AG04449 (cell line): ENCODE measurements at regions of chr14 and their contacts with region 1.

Region 1: DNA sequence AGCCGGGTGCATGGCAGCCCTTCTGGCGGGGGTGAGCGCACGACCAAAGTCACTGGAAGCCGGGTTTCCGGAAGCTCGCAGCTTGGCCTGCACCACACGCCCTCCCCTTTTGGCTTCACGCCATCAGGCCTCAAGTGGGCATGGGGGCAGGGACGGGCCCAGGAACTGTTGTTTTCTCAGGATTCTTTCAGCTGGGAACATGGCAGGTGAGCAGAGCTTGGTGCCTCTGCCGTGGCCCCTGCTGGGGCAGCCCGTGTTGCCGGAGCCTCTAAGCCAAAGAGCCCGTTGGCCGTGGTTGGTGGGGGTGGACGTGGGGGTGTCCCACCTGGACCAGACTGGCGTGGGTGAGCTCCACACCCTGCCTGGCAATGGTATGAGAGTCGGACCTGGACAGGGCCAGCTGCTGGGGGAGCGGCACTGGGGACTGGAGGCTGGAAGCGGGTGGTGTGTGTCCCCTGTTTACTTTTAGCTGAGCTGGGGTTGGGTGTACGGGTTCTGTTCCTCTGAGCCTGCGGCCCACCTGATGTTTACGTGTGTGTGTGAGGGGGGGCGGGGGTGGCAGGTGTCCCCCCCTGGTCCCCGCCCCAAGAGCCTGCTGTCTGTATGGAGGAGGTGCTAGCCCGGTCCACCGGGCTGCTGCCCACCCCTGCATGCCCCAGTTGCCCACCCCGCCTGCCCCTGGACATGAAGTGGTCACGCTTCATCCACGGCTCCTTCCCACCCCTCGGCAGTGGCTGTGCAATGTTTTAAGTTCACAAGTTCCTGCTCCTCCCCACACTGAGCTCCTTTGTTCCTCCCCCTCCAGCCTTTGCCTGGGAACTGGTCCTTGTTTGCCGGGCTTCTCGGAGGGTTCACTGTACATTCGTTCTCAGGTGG is 28.7 kb upstream of the PLD4 start:
- DNase-seq: no peak
- H3K4me3 ChIP-seq: no peak overlapping the region
- CTCF ChIP-seq: no peak

Region 2: DNA sequence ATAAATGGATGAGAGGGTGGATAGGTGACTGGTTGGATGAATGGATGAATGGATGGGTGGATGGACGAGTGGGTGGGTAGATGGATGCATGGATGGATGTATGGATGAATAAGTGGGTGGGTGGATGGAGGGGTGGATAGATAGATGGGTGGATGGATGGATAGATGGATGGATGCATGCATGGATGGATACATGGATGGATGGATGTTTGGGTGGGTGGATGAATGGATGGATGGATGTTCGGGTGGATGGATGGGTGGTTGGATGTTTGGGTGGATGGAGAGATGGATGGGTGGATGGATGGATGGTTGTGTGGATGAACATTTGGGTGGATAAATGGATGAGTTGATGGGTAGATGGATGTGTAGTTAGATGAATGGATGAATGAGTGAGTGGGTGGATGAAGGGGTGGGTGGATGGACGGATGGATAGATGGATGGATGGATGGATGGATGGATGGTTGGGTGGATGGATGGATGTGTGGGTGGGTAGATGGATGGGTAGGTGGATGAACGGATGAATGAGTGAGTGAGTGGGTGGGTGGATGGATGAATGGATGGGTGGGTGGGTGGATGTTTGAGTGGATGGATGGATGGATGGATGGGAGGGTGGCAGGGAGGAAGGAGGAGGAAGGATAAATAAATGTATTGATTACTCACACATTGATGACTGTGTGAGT is 281.8 kb before region 1 on chr14:
- CTCF ChIA-PET with region 1: no interaction called
- POLR2A ChIA-PET with region 1: no interaction called
- DNase-seq: no peak
- H3K4me3 ChIP-seq: no peak overlapping the region
- CTCF ChIP-seq: no peak

Region 3: DNA sequence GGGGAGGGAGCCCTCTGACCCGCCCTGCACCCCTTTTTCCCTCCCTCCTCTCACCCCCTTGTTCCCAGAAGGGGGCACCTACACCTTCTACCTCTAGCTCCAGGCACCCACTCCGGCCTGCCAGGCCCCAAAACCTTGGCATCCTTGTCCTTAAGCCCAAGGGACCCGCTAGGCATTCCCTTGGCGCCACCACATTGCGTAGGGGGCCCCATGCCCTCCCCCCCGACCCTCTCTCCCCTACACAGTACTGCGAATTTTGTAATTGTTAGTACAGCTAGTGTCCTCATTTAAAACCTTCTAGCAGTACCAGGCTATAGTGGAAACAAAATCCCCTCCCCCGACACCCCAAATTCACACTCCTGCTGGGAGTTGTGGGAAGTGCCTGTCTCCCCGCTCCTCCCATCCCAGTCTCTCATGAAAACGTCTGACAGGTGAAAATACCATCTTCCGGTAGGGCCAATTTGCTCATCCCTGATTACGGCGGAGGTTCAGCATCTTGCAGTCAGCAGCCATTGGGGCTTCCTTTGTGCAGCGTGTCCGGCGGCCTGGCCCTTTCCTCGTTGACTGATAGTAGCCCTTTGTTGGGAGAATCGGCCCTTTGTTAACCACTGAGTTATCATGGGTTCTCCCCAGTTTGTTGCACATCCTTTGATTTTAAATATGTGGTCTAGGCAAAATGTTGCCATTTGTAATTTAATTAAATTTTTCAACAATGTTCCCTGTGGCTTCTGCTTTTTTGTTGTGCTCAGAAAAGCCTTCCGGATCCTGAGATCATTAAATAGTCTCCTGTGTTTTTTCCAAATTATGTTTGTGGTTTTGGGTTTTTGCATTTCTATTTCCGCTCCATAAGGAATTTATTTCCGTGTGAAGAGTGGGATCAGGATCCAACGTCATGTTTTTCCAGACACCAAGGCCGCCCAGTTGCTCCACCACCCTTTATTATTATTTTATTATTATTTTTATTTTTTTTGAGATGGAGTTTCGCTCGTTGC is 38.9 kb before region 1 on chr14:
- CTCF ChIA-PET with region 1: no interaction called
- POLR2A ChIA-PET with region 1: no interaction called
- DNase-seq: no peak
- H3K4me3 ChIP-seq: no peak overlapping the region
- CTCF ChIP-seq: no peak

Region 4: GRCh38 chr14:104913435-104913834 is 17.4 kb after region 1 on chr14:
- CTCF ChIA-PET with region 1: interaction called, 27 read pairs
- POLR2A ChIA-PET with region 1: no interaction called
- DNase-seq: no peak
- H3K4me3 ChIP-seq: no peak overlapping the region
- CTCF ChIP-seq: no peak